ENCODE measurements at regions of chr12 and their contacts with region 1.

Region 1: GRCh38 chr12:121550974-121551634 is 29.7 kb downstream of the KDM2B start:
- DNase-seq: no peak
- ATAC-seq: no peak
- H3K4me3 Mint-ChIP-seq: no peak overlapping the region
- H3K27ac Mint-ChIP-seq: no peak overlapping the region
- H3K4me1 Mint-ChIP-seq: peaks cover 8% of the 10 kb centered on the region
- H3K27me3 Mint-ChIP-seq: no peaks in the 10 kb centered on the region
- CTCF ChIP-seq: no peak

Region 2: DNA sequence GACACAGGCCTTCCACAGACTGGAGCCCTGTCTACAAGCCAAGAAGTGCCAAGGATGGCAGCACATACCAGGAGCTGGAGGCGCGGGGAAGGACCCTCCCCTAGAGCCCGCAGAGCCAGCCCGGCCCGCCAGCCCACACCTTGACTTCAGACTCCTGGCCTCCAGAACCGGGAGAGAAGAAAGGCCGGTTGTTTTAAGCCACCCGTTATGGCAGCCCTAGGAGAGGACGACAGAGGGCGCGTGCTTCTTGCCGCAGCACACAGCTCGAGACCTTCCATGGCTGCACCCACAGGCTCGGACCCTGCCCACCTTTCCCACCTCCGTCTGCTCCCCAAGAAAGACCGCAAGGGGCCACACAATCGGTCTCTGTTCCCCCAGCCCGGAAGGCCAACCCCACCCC is 97.5 kb before region 1 on chr12:
- CTCF ChIA-PET with region 1: no interaction called
- POLR2A ChIA-PET with region 1: no interaction called
- DNase-seq: no peak
- ATAC-seq: peak; percentile 32; the same call in 1 of the 2 replicates
- H3K4me3 Mint-ChIP-seq: no peak overlapping the region
- H3K27ac Mint-ChIP-seq: peak overlapping the region; percentile 87
- H3K4me1 Mint-ChIP-seq: peaks cover 28% of the 10 kb centered on the region
- H3K27me3 Mint-ChIP-seq: no peaks in the 10 kb centered on the region
- CTCF ChIP-seq: no peak

Region 3: DNA sequence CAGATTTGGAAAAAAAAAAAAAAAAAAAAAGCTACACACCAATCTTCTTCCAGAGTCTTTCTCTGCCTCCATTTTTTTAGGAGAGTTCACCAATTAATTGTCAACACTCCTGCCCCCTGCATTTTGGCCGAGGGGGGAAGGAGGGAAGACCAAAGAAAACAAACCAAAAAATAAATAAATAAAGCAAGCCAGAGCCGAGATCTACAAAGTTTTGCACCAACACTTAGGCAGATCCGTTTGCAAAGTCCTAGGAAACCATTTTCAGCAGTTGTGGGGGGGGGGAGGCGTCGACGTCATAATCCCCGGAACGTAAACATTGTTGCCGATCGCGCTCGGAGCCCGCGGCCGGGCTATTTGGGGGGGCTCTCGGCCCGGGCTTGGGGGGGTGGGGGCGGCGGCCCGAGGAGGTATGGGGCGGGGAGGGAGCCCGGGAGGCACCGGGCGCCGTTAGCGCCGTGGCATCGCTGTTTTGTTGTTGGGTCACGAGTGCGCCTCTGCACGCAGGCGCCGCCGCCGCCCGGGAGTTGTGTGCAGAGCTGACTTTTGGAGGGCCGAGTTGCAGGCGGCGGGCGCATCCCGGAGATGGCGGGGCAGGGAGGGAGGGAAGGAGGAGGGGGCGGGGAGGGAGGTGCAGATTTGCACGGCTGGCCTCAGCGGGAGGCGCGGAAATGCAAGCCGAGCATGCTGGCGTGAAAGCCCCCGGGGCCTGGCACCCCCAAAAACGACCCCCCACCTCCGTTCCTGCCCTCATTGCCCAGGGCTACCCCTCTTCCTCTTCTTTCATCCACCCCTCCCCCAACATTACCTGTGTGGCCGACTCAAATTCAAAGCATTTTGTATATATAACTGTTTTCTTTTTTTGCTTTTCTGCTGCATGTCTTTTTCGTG is 29.1 kb after region 1 on chr12:
- CTCF ChIA-PET with region 1: interaction called, 55 read pairs
- POLR2A ChIA-PET with region 1: interaction called, 39 read pairs
- DNase-seq: peak; percentile 81
- ATAC-seq: peak; percentile 7; the same call in 1 of the 2 replicates
- H3K4me3 Mint-ChIP-seq: peak overlapping the region; percentile 99
- H3K27ac Mint-ChIP-seq: peak overlapping the region; percentile 100
- H3K4me1 Mint-ChIP-seq: peaks cover 46% of the 10 kb centered on the region
- H3K27me3 Mint-ChIP-seq: no peaks in the 10 kb centered on the region
- CTCF ChIP-seq: no peak

Region 4: GRCh38 chr12:121626087-121626852 is 75.2 kb after region 1 on chr12 and contains the start of gene ORAI1:
- CTCF ChIA-PET with region 1: interaction called, 67 read pairs
- POLR2A ChIA-PET with region 1: interaction called, 3 read pairs
- DNase-seq: peak; percentile 96
- ATAC-seq: peak; percentile 72
- H3K4me3 Mint-ChIP-seq: peak within 1 kb of the TSS; percentile 81
- H3K27ac Mint-ChIP-seq: peak within 1 kb of the TSS; percentile 80
- H3K4me1 Mint-ChIP-seq: peaks cover 49% of the 10 kb centered on the region
- H3K27me3 Mint-ChIP-seq: no peaks in the 10 kb centered on the region
- CTCF ChIP-seq: no peak
- total RNA-seq, gene ORAI1: 27.7 to 28.9 TPM (median 28.6 TPM) in 3 replicates

Region 5: DNA sequence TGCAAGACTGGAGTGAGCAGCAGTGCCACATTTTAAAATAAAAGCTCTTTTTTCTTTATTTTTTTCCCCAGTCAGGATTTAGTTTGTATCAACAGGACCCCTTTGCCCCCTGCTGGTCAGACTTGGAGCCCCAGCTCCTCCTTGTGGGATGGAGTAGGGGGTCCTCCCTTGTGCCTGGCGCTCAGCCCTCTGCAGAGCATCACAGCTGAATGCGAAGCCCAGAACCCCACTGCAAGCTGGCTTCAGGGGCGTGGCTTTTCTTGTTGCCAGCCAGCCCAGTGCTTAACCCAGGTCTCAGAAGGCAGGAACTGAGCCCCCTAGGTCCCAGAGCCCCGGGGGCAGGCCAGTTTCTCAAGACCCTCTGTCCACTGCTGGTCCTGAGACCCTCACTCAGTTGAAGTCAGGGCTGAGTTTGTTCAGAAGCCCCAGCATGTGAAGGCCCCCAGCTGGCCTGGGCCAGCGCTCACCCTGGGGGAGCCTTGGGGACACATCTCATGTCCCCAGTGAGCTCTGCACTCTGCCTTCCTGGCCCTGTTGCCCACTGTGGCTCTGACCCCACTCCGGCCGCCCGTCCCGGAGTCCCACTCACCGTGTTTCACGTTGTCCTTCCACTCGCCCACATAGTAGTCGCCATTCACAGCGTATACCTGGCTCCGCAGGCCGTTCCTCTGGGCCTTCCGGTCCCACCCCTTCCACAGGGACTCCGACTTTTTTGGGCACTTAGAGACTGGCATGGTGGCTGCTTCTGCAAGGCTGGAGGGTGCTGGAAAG is 117.8 kb after region 1 on chr12:
- CTCF ChIA-PET with region 1: interaction called, 77 read pairs
- POLR2A ChIA-PET with region 1: interaction called, 4 read pairs
- DNase-seq: peak; percentile 83
- ATAC-seq: peak; percentile 38
- H3K4me3 Mint-ChIP-seq: no peak overlapping the region
- H3K27ac Mint-ChIP-seq: peak overlapping the region; percentile 53; the same call in 1 of the 2 replicates
- H3K4me1 Mint-ChIP-seq: peaks cover 34% of the 10 kb centered on the region
- H3K27me3 Mint-ChIP-seq: no peaks in the 10 kb centered on the region; the same call in 1 of the 2 replicates
- CTCF ChIP-seq: no peak

Region 6: DNA sequence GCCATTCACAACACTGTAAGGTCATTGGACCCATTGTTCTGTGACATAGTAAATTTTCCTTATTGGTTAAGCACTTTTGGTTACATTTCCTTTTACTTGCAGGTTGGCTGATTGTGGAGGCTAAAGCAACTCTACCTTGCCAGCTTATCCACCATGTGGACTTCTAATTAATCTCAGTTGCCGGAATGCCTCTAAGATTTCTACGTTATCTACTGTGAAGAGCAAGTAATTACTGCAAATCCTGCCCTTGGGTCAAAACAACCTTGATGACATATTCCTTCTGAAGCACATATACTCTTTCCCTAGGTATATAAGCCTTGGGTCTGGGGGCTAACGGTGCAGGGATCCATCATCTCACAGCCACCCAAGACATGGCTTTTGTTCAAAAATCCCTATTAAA is 137.9 kb after region 1 on chr12:
- CTCF ChIA-PET with region 1: interaction called, 15 read pairs
- POLR2A ChIA-PET with region 1: no interaction called
- DNase-seq: no peak
- ATAC-seq: no peak
- H3K4me3 Mint-ChIP-seq: no peak overlapping the region
- H3K27ac Mint-ChIP-seq: no peak overlapping the region; the same call in 1 of the 2 replicates
- H3K4me1 Mint-ChIP-seq: peaks cover 5% of the 10 kb centered on the region; the same call in 1 of the 2 replicates
- H3K27me3 Mint-ChIP-seq: no peaks in the 10 kb centered on the region
- CTCF ChIP-seq: no peak

Region 7: DNA sequence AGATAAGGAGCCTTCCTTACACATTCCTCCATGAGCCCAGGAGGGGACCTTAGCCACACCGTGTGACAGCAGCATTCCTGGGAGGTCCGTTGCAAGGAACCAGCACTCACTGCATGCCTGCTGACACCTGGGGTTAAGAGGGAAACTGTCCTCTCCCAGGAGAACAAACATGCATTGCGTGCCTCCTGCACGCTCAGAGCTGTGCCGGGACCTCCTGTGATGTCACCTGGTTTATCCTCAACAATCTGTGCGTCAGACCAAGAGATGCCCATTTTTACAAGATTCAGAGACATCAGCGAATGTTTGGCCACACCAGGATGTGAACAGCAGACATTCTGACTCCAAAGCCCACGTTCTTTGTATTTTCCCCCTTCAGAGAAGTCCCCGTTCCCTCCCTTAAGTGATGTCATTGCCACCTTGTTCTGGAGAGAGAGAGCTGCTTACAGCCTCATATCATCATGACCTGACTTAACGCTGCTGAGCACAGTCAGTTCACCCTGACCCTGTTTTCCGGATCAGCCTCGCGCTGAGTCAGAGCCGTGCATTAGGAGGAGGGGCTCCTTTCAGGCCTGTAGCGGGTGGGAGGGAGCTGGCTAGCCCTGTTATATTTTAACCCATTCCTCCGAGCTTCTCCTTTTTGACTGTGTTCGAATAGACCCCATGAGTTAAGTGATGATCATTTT is 197.6 kb after region 1 on chr12:
- CTCF ChIA-PET with region 1: no interaction called
- POLR2A ChIA-PET with region 1: no interaction called
- DNase-seq: no peak
- ATAC-seq: peak; percentile 62
- H3K4me3 Mint-ChIP-seq: no peak overlapping the region
- H3K27ac Mint-ChIP-seq: peak overlapping the region; percentile 89
- H3K4me1 Mint-ChIP-seq: no peaks in the 10 kb centered on the region
- H3K27me3 Mint-ChIP-seq: no peaks in the 10 kb centered on the region
- CTCF ChIP-seq: no peak

Measured in WTC11 (cell line).